GM10248 (cell line): ENCODE measurements at regions of chr2 and their contacts with region 1.

Region 1: DNA sequence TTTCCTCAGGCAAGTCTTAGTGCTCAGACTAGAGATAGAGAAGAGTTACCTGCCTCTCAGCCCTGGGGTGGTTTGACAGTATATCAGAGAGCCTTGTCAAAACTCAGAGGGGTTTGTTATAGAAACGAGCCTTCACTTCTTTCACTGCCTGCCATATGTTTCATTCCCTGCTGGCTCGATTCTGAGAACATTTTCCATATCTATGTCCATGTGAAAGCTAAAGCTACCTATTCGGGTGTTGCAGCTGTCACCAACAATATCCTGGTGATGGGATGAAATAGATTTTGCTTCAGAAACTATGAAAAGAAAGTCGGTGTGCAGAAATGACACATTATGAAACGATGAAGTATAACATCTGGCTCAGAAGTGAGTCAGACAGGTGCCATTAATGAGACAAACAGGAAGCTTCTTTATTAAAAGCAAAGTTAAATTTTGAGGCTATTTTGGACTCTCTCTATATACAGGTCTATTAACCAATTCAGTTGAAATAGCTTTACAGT is 56.1 kb upstream of the TANK start:
- DNase-seq: peak; percentile 39
- CTCF ChIP-seq: no peak

Region 2: GRCh38 chr2:161090411-161090810 is 13.7 kb before region 1 on chr2:
- CTCF ChIA-PET with region 1: interaction called, 13 read pairs
- POLR2A ChIA-PET with region 1: interaction called, 4 read pairs
- DNase-seq: peak; percentile 22
- CTCF ChIP-seq: no peak